ENCODE measurements at regions of chr15 and their contacts with region 1.

Region 1: GRCh38 chr15:28975766-28976179 is 90.0 kb downstream of the APBA2 start:
- DNase-seq: peak; percentile 56 to 85 (median 68)
- ATAC-seq: peak; percentile 68
- H3K4me3 ChIP-seq: no peak overlapping the region
- H3K4me3 Mint-ChIP-seq: no peak overlapping the region
- H3K27ac ChIP-seq: no peak overlapping the region
- H3K27ac Mint-ChIP-seq: peak overlapping the region; percentile 70
- H3K4me1 ChIP-seq: peaks cover 8% of the 10 kb centered on the region
- H3K4me1 Mint-ChIP-seq: peaks cover 67% of the 10 kb centered on the region
- H3K27me3 ChIP-seq: no peaks in the 10 kb centered on the region
- H3K27me3 Mint-ChIP-seq: no peaks in the 10 kb centered on the region
- CTCF ChIP-seq: peak; percentile 97

Region 2: DNA sequence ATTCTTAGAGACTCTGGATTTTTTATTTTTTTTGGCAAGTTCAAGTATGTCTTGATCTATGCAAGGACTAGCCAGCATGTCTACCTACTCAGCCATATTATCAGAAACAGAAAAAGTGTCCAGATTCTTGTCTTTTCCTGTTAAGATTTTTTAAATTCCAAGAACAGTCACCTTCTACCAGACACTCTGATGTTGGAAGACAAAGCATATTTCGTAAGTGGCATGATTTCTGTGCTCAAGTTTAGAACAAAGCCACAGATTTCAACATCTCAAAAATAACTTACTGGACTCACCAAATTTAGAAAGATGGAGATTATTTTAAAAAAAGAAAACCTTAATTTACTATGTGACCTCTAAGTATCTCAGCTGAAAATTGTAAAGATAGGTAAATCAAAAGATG is 189.3 kb before region 1 on chr15:
- CTCF ChIA-PET with region 1: no interaction called
- POLR2A ChIA-PET with region 1: no interaction called
- intact Hi-C with region 1: loop called (anchors 5 to 10 kb)
- DNase-seq: no peak
- ATAC-seq: no peak
- H3K4me3 ChIP-seq: no peak overlapping the region
- H3K4me3 Mint-ChIP-seq: no peak overlapping the region
- H3K27ac ChIP-seq: no peak overlapping the region
- H3K27ac Mint-ChIP-seq: no peak overlapping the region
- H3K4me1 ChIP-seq: no peaks in the 10 kb centered on the region
- H3K4me1 Mint-ChIP-seq: peaks cover 6% of the 10 kb centered on the region
- H3K27me3 ChIP-seq: peaks cover 0 to 4% of the 10 kb centered on the region in 2 experiments
- H3K27me3 Mint-ChIP-seq: peaks cover 20% of the 10 kb centered on the region
- CTCF ChIP-seq: no peak

Region 3: GRCh38 chr15:28873541-28874190 is 102.1 kb before region 1 on chr15:
- CTCF ChIA-PET with region 1: interaction called, 6 read pairs
- POLR2A ChIA-PET with region 1: no interaction called
- intact Hi-C with region 1: loop called (anchors 1 kb)
- DNase-seq: peak in 13 of 14 experiments; percentile 24 to 70 (median 39)
- ATAC-seq: peak; percentile 89
- H3K4me3 ChIP-seq: no peak overlapping the region
- H3K4me3 Mint-ChIP-seq: no peak overlapping the region
- H3K27ac ChIP-seq: no peak overlapping the region
- H3K27ac Mint-ChIP-seq: no peak overlapping the region
- H3K4me1 ChIP-seq: peaks cover 19% of the 10 kb centered on the region
- H3K4me1 Mint-ChIP-seq: peaks cover 23% of the 10 kb centered on the region
- H3K27me3 ChIP-seq: no peaks in the 10 kb centered on the region
- H3K27me3 Mint-ChIP-seq: no peaks in the 10 kb centered on the region
- CTCF ChIP-seq: peak; percentile 42

Region 4: GRCh38 chr15:28935326-28935725 is 40.4 kb before region 1 on chr15:
- CTCF ChIA-PET with region 1: interaction called, 6 read pairs
- POLR2A ChIA-PET with region 1: interaction called, 4 read pairs
- intact Hi-C with region 1: loop called (anchors 2 to 5 kb)
- DNase-seq: peak in 13 of 14 experiments; percentile 23 to 67 (median 49)
- ATAC-seq: peak; percentile 32
- H3K4me3 ChIP-seq: no peak overlapping the region
- H3K4me3 Mint-ChIP-seq: peak overlapping the region; percentile 63
- H3K27ac ChIP-seq: no peak overlapping the region
- H3K27ac Mint-ChIP-seq: peak overlapping the region; percentile 93
- H3K4me1 ChIP-seq: peaks cover 73% of the 10 kb centered on the region
- H3K4me1 Mint-ChIP-seq: peaks cover 75% of the 10 kb centered on the region
- H3K27me3 ChIP-seq: no peaks in the 10 kb centered on the region
- H3K27me3 Mint-ChIP-seq: no peaks in the 10 kb centered on the region
- CTCF ChIP-seq: peak; percentile 58

Region 5: DNA sequence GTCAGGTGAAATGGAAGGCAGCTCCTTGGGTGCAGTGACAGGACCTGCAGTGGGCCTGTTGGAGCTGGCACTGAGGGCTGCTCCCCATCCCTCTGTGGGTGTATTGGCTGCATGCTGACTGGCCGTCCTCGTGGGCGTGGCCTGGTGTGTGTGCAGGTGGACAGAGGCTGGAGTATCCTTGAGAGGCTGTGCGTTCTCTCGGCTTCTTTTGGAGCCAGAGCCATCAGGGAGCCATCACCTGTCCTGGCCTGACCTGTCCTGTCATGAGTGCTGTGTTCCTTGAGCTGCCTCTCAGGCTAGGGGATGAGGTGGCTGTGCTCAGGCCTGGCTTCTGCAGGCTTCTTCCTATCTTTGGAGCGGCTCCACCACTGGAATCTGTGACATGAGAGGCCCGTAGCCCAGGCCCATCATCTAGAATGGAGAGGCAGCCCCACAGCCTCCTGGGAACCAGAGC is 28.5 kb before region 1 on chr15:
- CTCF ChIA-PET with region 1: interaction called, 3 read pairs
- POLR2A ChIA-PET with region 1: no interaction called
- intact Hi-C with region 1: loop called in 1 of 2 experiments (anchors 2 kb)
- DNase-seq: no peak
- ATAC-seq: no peak
- H3K4me3 ChIP-seq: no peak overlapping the region
- H3K4me3 Mint-ChIP-seq: peak overlapping the region; percentile 86
- H3K27ac ChIP-seq: peak overlapping the region; percentile 29 to 39
- H3K27ac Mint-ChIP-seq: peak overlapping the region; percentile 93
- H3K4me1 ChIP-seq: peaks cover 80% of the 10 kb centered on the region
- H3K4me1 Mint-ChIP-seq: peaks cover 87% of the 10 kb centered on the region
- H3K27me3 ChIP-seq: no peaks in the 10 kb centered on the region
- H3K27me3 Mint-ChIP-seq: no peaks in the 10 kb centered on the region
- CTCF ChIP-seq: no peak

Region 6: GRCh38 chr15:28962851-28963710 is 12.7 kb before region 1 on chr15:
- CTCF ChIA-PET with region 1: interaction called, 3 read pairs
- POLR2A ChIA-PET with region 1: no interaction called
- intact Hi-C with region 1: loop called in 1 of 2 experiments (anchors 2 kb)
- DNase-seq: no peak
- ATAC-seq: no peak
- H3K4me3 ChIP-seq: no peak overlapping the region
- H3K4me3 Mint-ChIP-seq: no peak overlapping the region
- H3K27ac ChIP-seq: no peak overlapping the region
- H3K27ac Mint-ChIP-seq: peak overlapping the region; percentile 75
- H3K4me1 ChIP-seq: peaks cover 1% of the 10 kb centered on the region
- H3K4me1 Mint-ChIP-seq: peaks cover 65% of the 10 kb centered on the region
- H3K27me3 ChIP-seq: no peaks in the 10 kb centered on the region
- H3K27me3 Mint-ChIP-seq: no peaks in the 10 kb centered on the region
- CTCF ChIP-seq: no peak

Region 7: DNA sequence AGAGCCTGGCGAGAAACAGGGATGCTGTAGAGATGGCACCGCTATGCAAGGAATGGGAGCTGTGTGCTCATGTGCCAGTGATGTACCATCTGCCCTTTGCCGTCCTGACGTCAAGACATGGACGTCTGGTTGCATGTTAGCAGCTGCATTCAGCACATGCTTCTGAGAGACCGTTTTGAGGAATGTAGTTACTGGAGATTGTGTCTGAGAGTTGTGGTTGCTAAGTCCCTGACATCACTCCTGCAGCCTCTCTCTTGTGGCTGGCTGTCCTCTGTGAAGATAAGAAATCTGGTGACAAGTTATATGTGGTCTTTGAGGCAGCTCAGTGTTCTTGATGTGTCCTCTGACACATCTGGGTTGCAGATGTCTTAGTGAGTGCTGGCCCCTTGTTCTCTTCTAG is 75.1 kb after region 1 on chr15:
- CTCF ChIA-PET with region 1: no interaction called
- POLR2A ChIA-PET with region 1: no interaction called
- intact Hi-C with region 1: no loop called
- DNase-seq: peak in 1 of 14 experiments; percentile 15
- ATAC-seq: peak; percentile 41
- H3K4me3 ChIP-seq: no peak overlapping the region
- H3K4me3 Mint-ChIP-seq: no peak overlapping the region
- H3K27ac ChIP-seq: no peak overlapping the region
- H3K27ac Mint-ChIP-seq: no peak overlapping the region
- H3K4me1 ChIP-seq: no peaks in the 10 kb centered on the region
- H3K4me1 Mint-ChIP-seq: peaks cover 48% of the 10 kb centered on the region
- H3K27me3 ChIP-seq: no peaks in the 10 kb centered on the region
- H3K27me3 Mint-ChIP-seq: no peaks in the 10 kb centered on the region
- CTCF ChIP-seq: no peak

Region 8: DNA sequence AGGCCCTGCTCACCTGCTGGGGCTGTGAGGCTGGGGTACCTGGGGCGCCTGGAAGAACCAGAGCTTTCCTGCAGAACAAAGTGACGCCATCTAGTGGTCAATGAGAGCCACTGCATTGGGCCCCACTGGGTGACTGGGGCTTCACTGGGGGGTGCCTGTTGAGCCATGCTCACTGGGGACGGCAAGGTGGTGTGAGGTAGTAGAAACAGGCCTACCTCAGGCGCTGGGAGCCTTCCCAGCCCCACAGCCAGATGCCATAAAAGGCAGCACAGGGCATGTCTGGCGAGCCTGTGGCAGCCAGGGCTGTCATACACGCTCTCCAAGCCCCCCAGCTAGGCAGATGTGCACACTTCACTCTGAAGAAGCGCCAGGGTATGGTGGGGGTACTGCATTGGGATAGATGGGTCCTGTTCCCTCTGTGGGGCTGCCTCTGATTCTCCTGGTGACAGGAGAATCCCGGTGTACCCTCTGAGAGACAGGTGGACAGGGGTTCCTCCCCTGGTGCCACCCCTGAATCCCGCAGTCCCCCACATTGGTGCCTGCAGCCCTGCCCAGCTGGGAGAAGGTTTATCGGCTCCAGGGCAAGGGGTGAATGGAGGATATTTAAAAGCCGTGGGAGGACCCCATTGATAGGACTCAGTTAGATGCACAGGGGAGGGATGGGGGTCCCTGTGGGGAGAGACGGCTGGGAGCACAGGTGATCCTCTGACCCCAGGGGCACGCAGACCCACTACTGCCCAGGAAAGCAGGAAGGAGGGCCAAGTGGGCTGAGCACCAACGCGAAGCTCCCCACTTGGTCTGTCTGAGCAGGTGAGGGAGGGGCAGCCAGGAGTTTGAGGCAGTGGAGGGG is 115.1 kb after region 1 on chr15:
- CTCF ChIA-PET with region 1: interaction called, 3 read pairs
- POLR2A ChIA-PET with region 1: no interaction called
- intact Hi-C with region 1: loop called in 1 of 2 experiments (anchors 5 kb)
- DNase-seq: peak in 13 of 14 experiments; percentile 24 to 68 (median 41)
- ATAC-seq: peak; percentile 76
- H3K4me3 ChIP-seq: no peak overlapping the region
- H3K4me3 Mint-ChIP-seq: peak overlapping the region; percentile 30
- H3K27ac ChIP-seq: peak overlapping the region in 1 of 2 donors; percentile 25
- H3K27ac Mint-ChIP-seq: peak overlapping the region; percentile 81
- H3K4me1 ChIP-seq: peaks cover 36% of the 10 kb centered on the region
- H3K4me1 Mint-ChIP-seq: peaks cover 42% of the 10 kb centered on the region
- H3K27me3 ChIP-seq: no peaks in the 10 kb centered on the region
- H3K27me3 Mint-ChIP-seq: no peaks in the 10 kb centered on the region
- CTCF ChIP-seq: peak; percentile 81

Measured in CD4-positive, alpha-beta T cell (primary cell).